ENCODE measurements at regions of chr1 and their contacts with region 1.

Region 1: GRCh38 chr1:156282479-156283222 is at the start of gene SMG5:
- DNase-seq: peak; percentile 91 to 98 (median 92)
- ATAC-seq: peak; percentile 96
- H3K4me3 ChIP-seq: peak within 1 kb of the TSS; percentile 97
- H3K27ac ChIP-seq: peak within 1 kb of the TSS; percentile 93
- H3K4me1 ChIP-seq: peaks cover 6 to 10% of the 10 kb centered on the region in 2 experiments; a peak in 4 of 5 replicates
- H3K27me3 ChIP-seq: no peaks in the 10 kb centered on the region
- CTCF ChIP-seq: peak in 1 of 3 experiments; percentile 39; a peak in 2 of 6 replicates
- EP300 ChIP-seq: peak; percentile 52; the same call in 1 of the 2 replicates
- POLR2A ChIP-seq: peak; percentile 98
- RAD21 ChIP-seq: no peak
- polyA plus RNA-seq, gene SMG5: 1.4 to 1.6 TPM

Region 2: DNA sequence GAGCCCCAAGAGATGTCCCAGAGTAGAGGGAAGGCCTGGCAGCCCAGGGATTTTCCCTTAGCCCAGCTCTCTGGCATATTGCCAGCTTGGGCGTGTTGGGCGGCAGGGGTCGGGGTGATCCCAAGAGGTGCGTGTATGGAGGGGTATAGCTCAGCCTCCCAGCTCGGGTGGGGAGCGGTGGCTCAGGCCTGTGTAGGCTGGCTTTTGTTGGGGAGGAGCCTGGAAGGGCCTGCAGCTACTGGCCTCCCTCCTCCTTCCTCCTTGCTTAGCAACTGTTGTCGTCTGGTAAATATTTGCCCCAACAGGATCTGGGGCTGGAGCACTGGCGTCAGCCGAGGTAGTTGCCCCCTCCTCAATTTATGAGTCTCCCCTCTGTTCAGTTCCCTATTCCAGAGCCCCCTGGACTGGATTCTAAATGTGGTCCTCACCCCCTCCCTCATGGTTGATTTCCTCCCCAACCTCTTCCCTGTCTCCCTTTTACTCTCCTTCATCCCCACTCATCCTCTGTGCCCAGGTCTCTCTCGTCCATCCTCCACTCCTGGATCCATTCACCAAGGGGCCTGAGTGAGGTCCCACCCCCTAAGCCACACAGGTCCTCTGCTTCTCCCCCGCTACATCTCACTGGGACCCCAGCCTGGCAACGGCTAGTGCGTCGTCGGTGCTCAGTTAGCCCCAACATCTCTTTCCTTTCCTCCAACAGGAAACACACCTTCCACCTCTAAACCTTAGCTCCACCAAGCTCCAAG is 178.4 kb before region 1 on chr1:
- CTCF ChIA-PET with region 1: no interaction called
- POLR2A ChIA-PET with region 1: no interaction called
- in situ Hi-C with region 1: no loop called
- intact Hi-C with region 1: no loop called
- DNase-seq: peak in 1 of 4 experiments; percentile 41
- ATAC-seq: no peak
- H3K4me3 ChIP-seq: no peak overlapping the region
- H3K27ac ChIP-seq: peak overlapping the region; percentile 97; the same call in 1 of the 3 replicates
- H3K4me1 ChIP-seq: peaks cover 33 to 55% of the 10 kb centered on the region in 2 experiments
- H3K27me3 ChIP-seq: no peaks in the 10 kb centered on the region
- CTCF ChIP-seq: no peak
- EP300 ChIP-seq: no peak
- POLR2A ChIP-seq: no peak
- RAD21 ChIP-seq: no peak

Region 3: GRCh38 chr1:156268336-156268735 is 14.3 kb before region 1 on chr1:
- CTCF ChIA-PET with region 1: no interaction called
- POLR2A ChIA-PET with region 1: interaction called, 63 read pairs
- in situ Hi-C with region 1: no loop called
- intact Hi-C with region 1: no loop called
- DNase-seq: no peak
- ATAC-seq: no peak
- H3K4me3 ChIP-seq: no peak overlapping the region
- H3K27ac ChIP-seq: no peak overlapping the region
- H3K4me1 ChIP-seq: no peaks in the 10 kb centered on the region
- H3K27me3 ChIP-seq: no peaks in the 10 kb centered on the region
- CTCF ChIP-seq: no peak
- EP300 ChIP-seq: no peak
- POLR2A ChIP-seq: no peak
- RAD21 ChIP-seq: no peak

Region 4: DNA sequence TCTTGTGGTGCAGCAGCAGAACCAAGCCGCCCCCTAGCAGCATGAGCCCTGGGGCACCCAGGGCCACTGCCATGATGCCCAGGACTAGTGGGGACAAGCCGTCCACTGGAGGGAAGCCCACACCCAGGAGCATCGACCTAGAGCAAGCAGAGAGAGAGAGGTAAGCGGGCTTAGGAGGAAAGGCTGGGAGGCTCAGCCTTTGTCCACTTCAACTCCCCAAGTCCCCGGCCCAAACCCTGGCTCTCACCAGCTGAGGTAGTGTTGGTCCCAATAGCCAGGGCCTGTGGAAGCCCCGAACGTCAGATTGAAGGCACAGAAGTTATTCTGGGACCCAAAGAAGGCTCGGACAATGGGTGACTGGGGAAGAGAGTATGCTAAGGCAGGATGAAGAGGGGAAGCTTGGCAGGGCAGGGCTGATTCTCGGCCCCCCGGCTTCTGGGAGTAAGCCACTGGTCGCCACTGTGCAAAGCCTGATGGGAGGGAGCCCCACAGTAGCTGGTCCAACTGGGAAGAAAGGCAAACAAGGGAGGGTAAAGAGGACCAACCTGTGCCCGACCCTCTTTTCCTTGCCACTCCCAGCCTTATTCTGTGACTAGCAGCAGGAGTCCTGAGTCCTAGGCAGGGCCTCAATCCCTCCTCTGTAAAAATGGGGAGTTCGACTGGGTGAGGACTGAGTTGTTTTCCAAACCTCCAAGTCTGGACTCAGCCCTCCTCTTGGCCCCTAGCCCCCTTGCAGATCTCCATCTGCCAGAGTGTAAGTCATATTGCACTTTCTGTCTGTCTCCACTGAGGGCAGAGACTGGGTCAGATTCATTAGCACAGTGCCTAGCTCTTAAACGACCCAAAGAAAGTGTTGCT is 10.7 kb after region 1 on chr1:
- CTCF ChIA-PET with region 1: no interaction called
- POLR2A ChIA-PET with region 1: interaction called, 16 read pairs
- in situ Hi-C with region 1: no loop called
- intact Hi-C with region 1: no loop called
- DNase-seq: no peak
- ATAC-seq: no peak
- H3K4me3 ChIP-seq: no peak overlapping the region
- H3K27ac ChIP-seq: no peak overlapping the region
- H3K4me1 ChIP-seq: peaks cover 7 to 15% of the 10 kb centered on the region in 2 experiments; a peak in 4 of 5 replicates
- H3K27me3 ChIP-seq: no peaks in the 10 kb centered on the region
- CTCF ChIP-seq: no peak
- EP300 ChIP-seq: no peak
- POLR2A ChIP-seq: no peak
- RAD21 ChIP-seq: no peak

Region 5: DNA sequence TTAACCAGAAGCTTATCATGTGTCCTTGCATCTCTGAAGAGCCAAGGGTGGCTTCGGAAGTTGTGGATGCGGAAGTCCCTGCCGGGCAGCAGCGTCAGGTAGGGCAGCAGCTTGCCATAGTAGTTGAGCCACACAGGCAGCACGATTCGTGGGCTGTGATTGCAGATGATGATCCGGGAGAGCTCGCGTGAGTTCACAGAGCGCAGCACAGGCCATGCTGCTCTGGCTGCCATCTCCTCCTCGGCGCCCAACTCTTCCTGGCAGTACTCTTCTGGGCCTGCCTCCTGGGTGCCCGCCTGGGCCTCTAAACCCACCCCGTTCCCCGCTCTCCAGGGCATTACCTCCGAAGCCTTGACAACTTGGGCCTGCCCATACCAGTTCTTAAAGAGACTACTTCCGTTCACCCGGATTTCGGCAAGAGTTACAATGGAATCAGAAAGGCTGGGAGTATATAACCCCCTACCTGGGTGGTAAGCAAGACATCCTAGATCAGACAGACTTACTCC is 16.3 kb after region 1 on chr1 and contains the start of gene VHLL:
- CTCF ChIA-PET with region 1: no interaction called
- POLR2A ChIA-PET with region 1: interaction called, 16 read pairs
- in situ Hi-C with region 1: no loop called
- intact Hi-C with region 1: no loop called
- DNase-seq: no peak
- ATAC-seq: no peak
- H3K4me3 ChIP-seq: no peak within 1 kb of the TSS
- H3K27ac ChIP-seq: no peak within 1 kb of the TSS
- H3K4me1 ChIP-seq: peaks cover 7 to 17% of the 10 kb centered on the region in 2 experiments; a peak in 4 of 5 replicates
- H3K27me3 ChIP-seq: peaks cover 0 to 2% of the 10 kb centered on the region in 2 experiments; a peak in 1 of 5 replicates
- CTCF ChIP-seq: no peak
- EP300 ChIP-seq: no peak
- POLR2A ChIP-seq: no peak
- RAD21 ChIP-seq: no peak
- polyA plus RNA-seq, gene VHLL: not detected